Naive thymus-derived CD4-positive, alpha-beta T cell (primary cell): ENCODE measurements at regions of chr19 and their contacts with region 1.

Region 1: GRCh38 chr19:50804420-50805272 is 14.4 kb downstream of the ACP4 start:
- DNase-seq: peak; percentile 87 to 99 (median 98)
- ATAC-seq: peak; percentile 98
- H3K4me3 ChIP-seq: peak overlapping the region; percentile 97
- H3K4me3 Mint-ChIP-seq: peak overlapping the region; percentile 92 to 100 (median 96)
- H3K27ac ChIP-seq: peak overlapping the region; percentile 97
- H3K27ac Mint-ChIP-seq: peak overlapping the region; percentile 97 to 100 (median 100)
- H3K4me1 ChIP-seq: peaks cover 15 to 19% of the 10 kb centered on the region in 2 donors
- H3K4me1 Mint-ChIP-seq: peaks cover 21 to 50% (median 42%) of the 10 kb centered on the region in 7 donors
- H3K27me3 ChIP-seq: no peaks in the 10 kb centered on the region
- H3K27me3 Mint-ChIP-seq: no peaks in the 10 kb centered on the region

Region 2: DNA sequence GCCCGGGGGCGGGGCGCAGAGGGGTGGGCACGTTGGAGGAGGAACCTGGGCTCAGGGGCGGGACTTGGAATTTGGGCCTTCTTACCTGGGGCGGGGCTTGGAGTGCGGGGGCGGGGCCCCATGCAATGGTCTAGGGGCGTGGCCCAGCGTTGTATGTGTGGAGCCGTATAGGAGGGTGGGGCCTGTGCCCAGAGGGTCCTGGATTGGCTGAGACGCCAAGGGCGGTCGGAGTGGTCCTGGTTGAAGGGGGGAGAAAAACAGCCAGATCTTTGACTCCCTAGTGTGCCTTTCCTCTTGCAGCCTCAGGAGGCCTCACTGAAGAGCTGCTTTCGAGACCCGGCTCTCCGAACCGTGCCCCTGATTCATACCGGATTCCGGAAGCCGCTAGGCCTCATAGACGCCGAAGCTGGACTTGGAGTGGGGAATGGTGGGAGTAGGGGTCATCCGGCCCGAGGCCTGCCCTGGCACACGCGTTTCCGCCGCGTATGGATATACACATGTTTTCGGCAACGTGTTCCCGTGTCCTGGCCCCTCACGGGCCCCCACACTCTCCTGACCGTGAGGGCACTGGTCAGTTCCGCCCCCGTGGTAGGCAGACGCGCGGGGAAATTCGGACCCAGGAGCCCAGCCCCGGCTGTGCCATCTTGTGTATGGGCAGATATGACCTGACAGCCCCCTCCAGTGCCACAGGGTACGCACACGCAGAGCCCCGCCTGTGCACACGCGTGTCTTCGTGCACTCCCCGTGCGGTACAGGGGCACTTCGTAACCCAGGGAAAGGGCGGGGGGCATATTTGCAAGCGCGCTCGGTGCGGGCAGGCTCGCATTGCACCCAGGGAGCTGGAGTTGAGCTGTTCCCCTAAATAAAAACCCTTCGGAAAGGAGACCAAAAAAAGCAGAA is 1214.3 kb before region 1 on chr19:
- CTCF ChIA-PET with region 1: no interaction called
- POLR2A ChIA-PET with region 1: no interaction called
- intact Hi-C with region 1: no loop called
- DNase-seq: peak; percentile 85 to 98 (median 97)
- ATAC-seq: peak; percentile 90
- H3K4me3 ChIP-seq: peak overlapping the region; percentile 97
- H3K4me3 Mint-ChIP-seq: peak overlapping the region; percentile 85 to 95 (median 94)
- H3K27ac ChIP-seq: peak overlapping the region; percentile 86
- H3K27ac Mint-ChIP-seq: peak overlapping the region; percentile 76 to 95 (median 93)
- H3K4me1 ChIP-seq: peaks cover 15 to 18% of the 10 kb centered on the region in 2 donors
- H3K4me1 Mint-ChIP-seq: peaks cover 26 to 42% (median 31%) of the 10 kb centered on the region in 7 donors
- H3K27me3 ChIP-seq: no peaks in the 10 kb centered on the region
- H3K27me3 Mint-ChIP-seq: peaks cover 0 to 12% (median 0%) of the 10 kb centered on the region in 5 donors

Region 3: GRCh38 chr19:49929611-49930482 is 874.8 kb before region 1 on chr19:
- CTCF ChIA-PET with region 1: no interaction called
- POLR2A ChIA-PET with region 1: interaction called, 3 read pairs
- intact Hi-C with region 1: loop called in 1 of 2 experiments (anchors 1 kb)
- DNase-seq: peak in 8 of 9 donors; percentile 88 to 97 (median 96)
- ATAC-seq: peak; percentile 92
- H3K4me3 ChIP-seq: peak overlapping the region; percentile 100
- H3K4me3 Mint-ChIP-seq: peak overlapping the region; percentile 95 to 100 (median 97)
- H3K27ac ChIP-seq: peak overlapping the region; percentile 99
- H3K27ac Mint-ChIP-seq: peak overlapping the region; percentile 96 to 99 (median 97)
- H3K4me1 ChIP-seq: peaks cover 34 to 35% of the 10 kb centered on the region in 2 donors
- H3K4me1 Mint-ChIP-seq: peaks cover 46 to 76% (median 68%) of the 10 kb centered on the region in 7 donors
- H3K27me3 ChIP-seq: no peaks in the 10 kb centered on the region
- H3K27me3 Mint-ChIP-seq: peaks cover 0 to 3% (median 0%) of the 10 kb centered on the region in 5 donors

Region 4: GRCh38 chr19:50376166-50377050 is 428.2 kb before region 1 on chr19 and contains the start of gene NR1H2:
- CTCF ChIA-PET with region 1: no interaction called
- POLR2A ChIA-PET with region 1: no interaction called
- intact Hi-C with region 1: loop called in 1 of 2 experiments (anchors 1 kb)
- DNase-seq: peak; percentile 89 to 97 (median 95)
- ATAC-seq: peak; percentile 94
- H3K4me3 ChIP-seq: peak within 1 kb of the TSS; percentile 99
- H3K4me3 Mint-ChIP-seq: peak within 1 kb of the TSS; percentile 92 to 100 (median 98)
- H3K27ac ChIP-seq: peak within 1 kb of the TSS; percentile 100
- H3K27ac Mint-ChIP-seq: peak within 1 kb of the TSS; percentile 99 to 100 (median 100)
- H3K4me1 ChIP-seq: peaks cover 4 to 10% of the 10 kb centered on the region in 2 donors
- H3K4me1 Mint-ChIP-seq: peaks cover 12 to 37% (median 24%) of the 10 kb centered on the region in 7 donors
- H3K27me3 ChIP-seq: no peaks in the 10 kb centered on the region
- H3K27me3 Mint-ChIP-seq: no peaks in the 10 kb centered on the region
- total RNA-seq, gene NR1H2: 66.6 to 284 (median 114) TPM

Region 5: DNA sequence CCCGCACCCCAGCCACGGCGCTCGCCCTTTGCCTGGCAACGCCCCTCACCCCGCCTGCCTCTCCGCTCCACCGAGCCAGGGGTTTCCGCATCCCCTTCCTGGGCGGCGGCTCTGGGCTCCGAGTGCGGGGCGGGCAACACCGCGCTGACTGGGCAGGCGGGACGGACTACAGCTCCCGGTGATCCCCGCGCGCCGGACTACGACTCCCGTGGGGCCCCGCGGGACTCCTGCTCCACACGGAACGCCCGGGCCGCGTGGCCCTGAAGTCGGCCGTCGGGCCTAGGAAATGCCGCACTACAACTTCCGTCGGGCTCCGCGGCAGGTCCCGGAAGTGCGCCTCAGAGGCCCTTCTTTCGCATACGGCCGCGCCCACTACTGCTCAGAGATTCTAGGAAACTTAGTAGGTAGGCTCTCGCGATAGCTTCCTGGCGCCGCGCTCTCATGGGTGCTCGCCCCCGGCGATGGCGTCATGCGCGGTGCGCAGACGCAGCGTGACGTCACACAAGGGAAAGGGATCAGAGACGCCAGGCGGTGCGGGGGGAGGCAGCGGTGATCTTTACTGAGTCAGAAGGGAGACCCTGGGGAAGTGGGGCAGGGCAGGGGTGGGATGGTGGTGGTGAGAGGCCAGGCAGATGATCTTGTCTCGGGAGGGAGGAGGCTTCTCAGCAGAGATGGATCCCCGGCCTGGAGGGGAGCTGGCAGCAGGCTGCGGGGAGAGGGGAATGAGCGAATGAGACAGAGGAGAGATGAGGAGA is 293.4 kb before region 1 on chr19 and contains the start of gene JOSD2:
- CTCF ChIA-PET with region 1: no interaction called
- POLR2A ChIA-PET with region 1: no interaction called
- intact Hi-C with region 1: loop called (anchors 1 kb)
- DNase-seq: peak; percentile 89 to 99 (median 96)
- ATAC-seq: peak; percentile 94
- H3K4me3 ChIP-seq: peak within 1 kb of the TSS; percentile 75
- H3K4me3 Mint-ChIP-seq: peak within 1 kb of the TSS; percentile 75 to 97 (median 88)
- H3K27ac ChIP-seq: peak within 1 kb of the TSS; percentile 86
- H3K27ac Mint-ChIP-seq: peak within 1 kb of the TSS; percentile 87 to 99 (median 97)
- H3K4me1 ChIP-seq: peaks cover 7 to 16% of the 10 kb centered on the region in 2 donors
- H3K4me1 Mint-ChIP-seq: peaks cover 0 to 27% (median 19%) of the 10 kb centered on the region in 7 donors
- H3K27me3 ChIP-seq: no peaks in the 10 kb centered on the region
- H3K27me3 Mint-ChIP-seq: peaks cover 0 to 16% (median 6%) of the 10 kb centered on the region in 5 donors
- total RNA-seq, gene JOSD2: 13.0 to 45.9 (median 22.7) TPM

Region 6: GRCh38 chr19:50835785-50836542 is 31.3 kb after region 1 on chr19:
- CTCF ChIA-PET with region 1: no interaction called
- POLR2A ChIA-PET with region 1: no interaction called
- intact Hi-C with region 1: loop called in 1 of 2 experiments (anchors 1 kb)
- DNase-seq: peak; percentile 18 to 90 (median 43)
- ATAC-seq: peak; percentile 86
- H3K4me3 ChIP-seq: peak overlapping the region; percentile 51
- H3K4me3 Mint-ChIP-seq: peak overlapping the region; percentile 78 to 94 (median 87)
- H3K27ac ChIP-seq: no peak overlapping the region
- H3K27ac Mint-ChIP-seq: no peak overlapping the region
- H3K4me1 ChIP-seq: peaks cover 4 to 8% of the 10 kb centered on the region in 2 donors
- H3K4me1 Mint-ChIP-seq: peaks cover 5 to 25% (median 11%) of the 10 kb centered on the region in 7 donors
- H3K27me3 ChIP-seq: peaks cover 0 to 3% of the 10 kb centered on the region in 2 donors
- H3K27me3 Mint-ChIP-seq: peaks cover 30 to 61% (median 45%) of the 10 kb centered on the region in 5 donors

Region 7: DNA sequence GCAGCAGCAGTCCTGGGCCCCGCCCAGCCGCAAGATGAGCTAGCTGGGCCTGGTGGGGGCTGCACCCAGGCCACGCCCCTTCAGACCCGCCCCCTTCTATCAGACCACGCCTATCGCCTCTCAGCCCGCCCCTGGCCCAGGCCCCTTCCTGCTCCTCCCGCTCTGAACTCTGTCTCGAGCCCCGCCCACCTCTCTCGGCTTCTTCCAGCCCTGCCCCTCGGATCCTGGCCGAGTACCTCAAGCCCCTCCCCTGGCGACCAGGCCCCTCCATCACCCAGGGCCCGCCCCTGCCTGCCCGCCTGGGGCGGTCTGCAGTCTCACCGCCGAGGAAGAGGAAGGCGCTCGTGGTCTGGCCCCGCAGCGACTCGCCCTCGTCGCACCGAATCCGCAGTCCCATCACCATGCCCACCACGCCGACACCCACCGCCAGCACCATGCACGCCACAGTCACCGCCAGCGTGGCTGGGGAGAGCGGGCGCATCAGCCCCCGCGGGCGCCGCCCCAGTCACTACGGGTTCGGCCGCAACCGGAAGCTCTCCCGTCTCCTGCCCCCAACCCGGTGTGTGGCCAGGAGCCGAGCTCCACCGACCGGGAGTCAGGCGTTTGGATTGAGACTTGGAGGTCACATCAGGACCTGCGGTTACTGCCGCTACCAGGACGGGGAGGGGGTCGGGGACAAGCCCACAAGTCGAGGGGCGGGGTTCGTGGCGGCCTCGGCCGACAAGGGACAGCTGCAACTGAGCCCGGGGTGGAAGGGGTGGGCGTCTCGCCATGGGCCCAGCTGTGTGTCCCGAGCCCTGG is 563.1 kb after region 1 on chr19:
- CTCF ChIA-PET with region 1: no interaction called
- POLR2A ChIA-PET with region 1: no interaction called
- intact Hi-C with region 1: loop called in 1 of 2 experiments (anchors 1 kb)
- DNase-seq: peak; percentile 84 to 100 (median 90)
- ATAC-seq: peak; percentile 93
- H3K4me3 ChIP-seq: peak overlapping the region; percentile 96
- H3K4me3 Mint-ChIP-seq: peak overlapping the region; percentile 92 to 100 (median 98)
- H3K27ac ChIP-seq: peak overlapping the region; percentile 81
- H3K27ac Mint-ChIP-seq: peak overlapping the region; percentile 79 to 98 (median 95)
- H3K4me1 ChIP-seq: peaks cover 23 to 26% of the 10 kb centered on the region in 2 donors
- H3K4me1 Mint-ChIP-seq: peaks cover 53 to 81% (median 59%) of the 10 kb centered on the region in 7 donors
- H3K27me3 ChIP-seq: no peaks in the 10 kb centered on the region
- H3K27me3 Mint-ChIP-seq: no peaks in the 10 kb centered on the region